Esophagus squamous epithelium (tissue), 5 donors: ENCODE measurements at regions of chr19 and their contacts with region 1.

Region 1: GRCh38 chr19:30649934-30650614 is 277.9 kb downstream of the ZNF536 start:
- DNase-seq: no peak
- H3K4me3 ChIP-seq: no peak overlapping the region
- H3K27ac ChIP-seq: no peak overlapping the region
- H3K4me1 ChIP-seq: no peaks in the 10 kb centered on the region
- H3K27me3 ChIP-seq: peaks cover 0 to 54% (median 0%) of the 10 kb centered on the region in 4 donors
- CTCF ChIP-seq: peak; percentile 26 to 74 (median 52)
- POLR2A ChIP-seq: no peak

Region 2: GRCh38 chr19:30227661-30228428 is 422.2 kb before region 1 on chr19:
- intact Hi-C with region 1: loop called (anchors 10 kb)
- DNase-seq: no peak
- H3K4me3 ChIP-seq: peak overlapping the region; percentile 46 to 87 (median 58)
- H3K27ac ChIP-seq: peak overlapping the region; percentile 69 to 92 (median 78)
- H3K4me1 ChIP-seq: peaks cover 14 to 65% (median 16%) of the 10 kb centered on the region in 3 donors
- H3K27me3 ChIP-seq: peaks cover under 1 to 97% (median 8%) of the 10 kb centered on the region in 4 donors
- CTCF ChIP-seq: peak in 5 of 6 experiments; percentile 16 to 70 (median 54)
- POLR2A ChIP-seq: peak in 2 of 4 donors; percentile 7 to 29

Region 3: GRCh38 chr19:30577551-30578105 is 72.4 kb before region 1 on chr19:
- intact Hi-C with region 1: no loop called
- DNase-seq: no peak
- H3K4me3 ChIP-seq: no peak overlapping the region
- H3K27ac ChIP-seq: no peak overlapping the region
- H3K4me1 ChIP-seq: no peaks in the 10 kb centered on the region
- H3K27me3 ChIP-seq: no peaks in the 10 kb centered on the region
- CTCF ChIP-seq: no peak
- POLR2A ChIP-seq: no peak